ENCODE measurements at regions of chr11 and their contacts with region 1.

Region 1: GRCh38 chr11:106424111-106424510 is 346.6 kb downstream of the AASDHPPT start:
- DNase-seq: no peak
- ATAC-seq: peak; percentile 32; the same call in 1 of the 2 replicates
- H3K4me3 Mint-ChIP-seq: no peak overlapping the region
- H3K27ac Mint-ChIP-seq: no peak overlapping the region
- H3K4me1 Mint-ChIP-seq: peaks cover 37% of the 10 kb centered on the region
- H3K27me3 Mint-ChIP-seq: no peaks in the 10 kb centered on the region
- CTCF ChIP-seq: no peak

Region 2: GRCh38 chr11:106276859-106277436 is 147.2 kb before region 1 on chr11:
- CTCF ChIA-PET with region 1: no interaction called
- POLR2A ChIA-PET with region 1: interaction called, 10 read pairs
- DNase-seq: no peak
- ATAC-seq: peak; percentile 96
- H3K4me3 Mint-ChIP-seq: no peak overlapping the region
- H3K27ac Mint-ChIP-seq: no peak overlapping the region
- H3K4me1 Mint-ChIP-seq: peaks cover 22% of the 10 kb centered on the region
- H3K27me3 Mint-ChIP-seq: no peaks in the 10 kb centered on the region
- CTCF ChIP-seq: 0 out of 2 replicates have a peak, but pooled peaks have one; percentile 18

Region 3: DNA sequence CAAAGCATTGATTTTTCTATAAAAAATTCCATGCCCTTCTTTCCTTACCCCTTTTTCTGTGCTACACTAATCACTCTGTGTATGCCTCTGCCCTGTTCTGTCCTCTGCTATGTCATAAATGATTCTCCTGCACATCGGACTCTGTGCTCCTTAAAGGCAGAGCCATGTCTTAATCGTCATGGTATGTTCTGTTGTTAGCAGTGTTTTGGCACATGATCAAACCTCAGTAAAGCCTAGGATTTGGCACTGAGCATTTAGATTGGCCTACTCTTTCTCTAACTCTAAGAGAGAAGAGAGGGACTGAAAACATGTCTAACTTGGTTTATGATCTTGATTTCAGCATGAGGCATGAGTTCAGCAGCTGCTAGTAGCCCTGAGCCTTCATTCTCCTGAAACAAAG is 79.7 kb before region 1 on chr11:
- CTCF ChIA-PET with region 1: no interaction called
- POLR2A ChIA-PET with region 1: no interaction called
- DNase-seq: no peak
- ATAC-seq: no peak
- H3K4me3 Mint-ChIP-seq: no peak overlapping the region
- H3K27ac Mint-ChIP-seq: no peak overlapping the region; the same call in 1 of the 2 replicates
- H3K4me1 Mint-ChIP-seq: peaks cover 5% of the 10 kb centered on the region
- H3K27me3 Mint-ChIP-seq: no peaks in the 10 kb centered on the region
- CTCF ChIP-seq: no peak

Region 4: DNA sequence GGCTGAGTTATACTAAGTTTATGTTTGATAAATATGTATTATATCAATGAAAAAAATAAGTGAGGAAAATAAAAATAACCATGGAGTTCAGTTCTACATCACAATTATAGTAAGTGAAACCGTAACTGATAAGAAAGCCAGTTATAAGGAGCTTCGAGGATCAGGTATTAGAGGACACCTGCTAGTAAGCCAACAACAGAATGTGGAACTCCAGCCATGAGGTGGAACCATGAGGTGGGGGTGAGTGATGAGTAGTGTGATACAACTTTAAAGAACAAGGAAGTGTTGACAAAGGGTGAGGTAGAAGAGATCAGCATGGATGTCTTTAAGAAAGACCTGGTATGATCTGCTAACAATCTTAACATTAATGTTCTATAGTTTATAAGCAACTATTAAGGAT is 141.2 kb after region 1 on chr11:
- CTCF ChIA-PET with region 1: no interaction called
- POLR2A ChIA-PET with region 1: no interaction called
- DNase-seq: no peak
- ATAC-seq: no peak
- H3K4me3 Mint-ChIP-seq: no peak overlapping the region
- H3K27ac Mint-ChIP-seq: no peak overlapping the region
- H3K4me1 Mint-ChIP-seq: no peaks in the 10 kb centered on the region
- H3K27me3 Mint-ChIP-seq: no peaks in the 10 kb centered on the region
- CTCF ChIP-seq: no peak

Measured in WTC11 (cell line).